Activated T-helper 1 cell treated with anti-CD3 and anti-CD28 coated beads, Interleukin-12 subunit alpha, Interleukin-12 subunit beta, Interleukin-2, Interleukin-4 antibody, amounts not matched to agents 30 ng/mL and 10 ng/mL and 1 ng/mL, durations not matched to agents 14 hours and 24 hours and 36 hours (primary cell): ENCODE measurements at regions of chr19 and their contacts with region 1.

Region 1: GRCh38 chr19:37906869-37907734 is at the start of gene SIPA1L3:
- DNase-seq: peak; percentile 91
- H3K4me3 Mint-ChIP-seq: peak within 1 kb of the TSS; percentile 93
- H3K27ac Mint-ChIP-seq: peak within 1 kb of the TSS; percentile 68
- H3K4me1 Mint-ChIP-seq: peaks cover 17% of the 10 kb centered on the region
- H3K27me3 Mint-ChIP-seq: peaks cover 2% of the 10 kb centered on the region
- total RNA-seq, gene SIPA1L3: 16.7 and 18.4 TPM in 2 replicates

Region 2: GRCh38 chr19:37594304-37594981 is 312.7 kb before region 1 on chr19 and contains the starts of genes ZNF540 and ZNF571:
- intact Hi-C with region 1: loop called (anchors 2 kb)
- DNase-seq: peak; percentile 81
- H3K4me3 Mint-ChIP-seq: peak within 1 kb of the TSS; percentile 88
- H3K27ac Mint-ChIP-seq: peak within 1 kb of the TSS; percentile 91
- H3K4me1 Mint-ChIP-seq: peaks cover 24% of the 10 kb centered on the region
- H3K27me3 Mint-ChIP-seq: no peaks in the 10 kb centered on the region
- total RNA-seq, gene ZNF540: 0.39 and 0.70 TPM in 2 replicates
- total RNA-seq, gene ZNF571: 0.64 and 1.4 TPM in 2 replicates

Region 3: GRCh38 chr19:37876032-37876431 is 31.1 kb before region 1 on chr19:
- intact Hi-C with region 1: no loop called
- DNase-seq: no peak
- H3K4me3 Mint-ChIP-seq: no peak overlapping the region
- H3K27ac Mint-ChIP-seq: no peak overlapping the region
- H3K4me1 Mint-ChIP-seq: no peaks in the 10 kb centered on the region
- H3K27me3 Mint-ChIP-seq: peaks cover 2% of the 10 kb centered on the region

Region 4: DNA sequence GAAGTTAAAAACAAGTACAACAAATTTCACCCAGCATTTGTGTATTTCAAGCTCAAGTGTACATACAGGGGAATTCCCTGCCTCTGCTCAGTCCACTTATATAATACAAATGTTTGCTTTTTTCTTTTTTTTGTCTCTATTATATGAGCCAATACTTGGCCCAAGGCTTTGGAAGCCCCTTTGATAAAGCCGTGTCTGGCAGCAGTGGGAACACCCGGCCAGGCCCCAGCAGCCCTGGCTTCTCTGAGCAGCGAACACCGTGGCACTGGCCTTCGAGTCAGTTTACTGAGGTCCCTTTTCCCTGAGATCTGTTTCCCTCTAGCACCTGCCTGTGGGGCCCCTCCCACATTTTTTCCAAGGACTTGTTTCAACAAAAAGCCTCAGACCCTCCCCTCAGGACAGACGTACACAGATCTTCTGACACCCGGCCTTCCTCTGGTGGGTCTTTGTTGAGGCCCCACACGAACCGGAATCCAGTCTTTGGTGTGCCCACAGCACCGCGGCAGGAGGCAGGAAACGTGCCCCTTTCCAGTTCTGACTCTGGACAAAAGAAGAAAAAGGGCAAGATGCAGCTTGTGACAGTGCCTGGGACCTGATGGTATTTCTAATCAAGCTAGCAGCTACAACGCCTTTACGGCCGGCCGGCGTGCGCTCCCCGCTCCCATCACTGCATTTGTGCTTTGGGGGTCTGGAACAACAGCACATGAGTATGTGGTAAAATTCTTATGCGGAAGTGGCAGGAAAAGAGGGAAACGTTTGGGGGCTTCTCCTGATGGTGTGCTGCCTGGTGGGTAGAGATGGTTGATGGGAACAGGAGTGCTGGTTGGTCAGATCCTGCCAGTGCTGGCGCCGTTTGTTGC is 13.7 kb after region 1 on chr19:
- intact Hi-C with region 1: no loop called
- DNase-seq: no peak
- H3K4me3 Mint-ChIP-seq: no peak overlapping the region
- H3K27ac Mint-ChIP-seq: no peak overlapping the region
- H3K4me1 Mint-ChIP-seq: no peaks in the 10 kb centered on the region
- H3K27me3 Mint-ChIP-seq: no peaks in the 10 kb centered on the region

Region 5: DNA sequence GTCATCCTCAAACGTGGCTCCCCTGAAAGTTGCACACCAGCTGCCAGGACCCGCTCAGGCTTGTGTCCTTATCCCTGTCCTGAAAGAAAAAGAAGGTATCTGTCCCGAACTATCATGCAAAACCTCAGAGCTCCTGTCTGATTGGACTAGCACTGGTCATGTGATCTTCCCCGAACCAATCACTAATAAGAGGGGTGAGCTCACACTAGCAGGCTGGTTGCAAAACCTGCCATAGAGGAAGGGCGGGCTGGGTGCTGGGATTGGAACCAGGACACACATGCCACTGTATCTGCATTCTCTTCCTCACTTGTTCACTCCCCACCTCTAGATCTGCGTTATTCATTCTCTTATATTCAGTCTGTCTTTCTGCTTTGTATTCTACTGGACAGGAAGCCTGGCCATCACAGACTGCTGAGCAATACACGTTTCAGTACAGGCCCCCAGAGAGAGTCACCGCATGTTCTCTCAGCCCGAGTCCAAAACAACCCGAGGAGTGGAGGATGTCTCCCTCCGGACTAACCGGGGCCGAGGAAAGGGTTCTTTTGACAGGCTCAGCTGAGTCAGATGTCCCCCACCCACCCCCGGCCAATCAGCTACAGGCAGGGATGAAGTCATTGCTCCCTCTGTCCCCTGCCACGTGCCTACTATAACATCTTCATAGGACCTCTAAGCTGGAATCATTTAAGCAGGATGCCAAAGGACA is 97.6 kb after region 1 on chr19:
- intact Hi-C with region 1: loop called (anchors 5 kb)
- DNase-seq: no peak
- H3K4me3 Mint-ChIP-seq: no peak overlapping the region
- H3K27ac Mint-ChIP-seq: no peak overlapping the region
- H3K4me1 Mint-ChIP-seq: no peaks in the 10 kb centered on the region
- H3K27me3 Mint-ChIP-seq: no peaks in the 10 kb centered on the region

Region 6: GRCh38 chr19:38142176-38143035 is 235.3 kb after region 1 on chr19:
- intact Hi-C with region 1: loop called (anchors 2 kb)
- DNase-seq: peak; percentile 7
- H3K4me3 Mint-ChIP-seq: no peak overlapping the region
- H3K27ac Mint-ChIP-seq: no peak overlapping the region
- H3K4me1 Mint-ChIP-seq: no peaks in the 10 kb centered on the region
- H3K27me3 Mint-ChIP-seq: no peaks in the 10 kb centered on the region

Region 7: GRCh38 chr19:38277969-38278680 is 371.0 kb after region 1 on chr19:
- intact Hi-C with region 1: no loop called
- DNase-seq: no peak
- H3K4me3 Mint-ChIP-seq: no peak overlapping the region
- H3K27ac Mint-ChIP-seq: no peak overlapping the region
- H3K4me1 Mint-ChIP-seq: peaks cover 19% of the 10 kb centered on the region
- H3K27me3 Mint-ChIP-seq: peaks cover 3% of the 10 kb centered on the region

Region 8: GRCh38 chr19:38315657-38316476 is 408.8 kb after region 1 on chr19 and contains the start of gene YIF1B:
- intact Hi-C with region 1: loop called (anchors 1 kb)
- DNase-seq: peak; percentile 94
- H3K4me3 Mint-ChIP-seq: peak within 1 kb of the TSS; percentile 85
- H3K27ac Mint-ChIP-seq: peak within 1 kb of the TSS; percentile 96
- H3K4me1 Mint-ChIP-seq: peaks cover 46% of the 10 kb centered on the region
- H3K27me3 Mint-ChIP-seq: no peaks in the 10 kb centered on the region
- total RNA-seq, gene YIF1B: 89.8 and 96.0 TPM in 2 replicates

Region 9: DNA sequence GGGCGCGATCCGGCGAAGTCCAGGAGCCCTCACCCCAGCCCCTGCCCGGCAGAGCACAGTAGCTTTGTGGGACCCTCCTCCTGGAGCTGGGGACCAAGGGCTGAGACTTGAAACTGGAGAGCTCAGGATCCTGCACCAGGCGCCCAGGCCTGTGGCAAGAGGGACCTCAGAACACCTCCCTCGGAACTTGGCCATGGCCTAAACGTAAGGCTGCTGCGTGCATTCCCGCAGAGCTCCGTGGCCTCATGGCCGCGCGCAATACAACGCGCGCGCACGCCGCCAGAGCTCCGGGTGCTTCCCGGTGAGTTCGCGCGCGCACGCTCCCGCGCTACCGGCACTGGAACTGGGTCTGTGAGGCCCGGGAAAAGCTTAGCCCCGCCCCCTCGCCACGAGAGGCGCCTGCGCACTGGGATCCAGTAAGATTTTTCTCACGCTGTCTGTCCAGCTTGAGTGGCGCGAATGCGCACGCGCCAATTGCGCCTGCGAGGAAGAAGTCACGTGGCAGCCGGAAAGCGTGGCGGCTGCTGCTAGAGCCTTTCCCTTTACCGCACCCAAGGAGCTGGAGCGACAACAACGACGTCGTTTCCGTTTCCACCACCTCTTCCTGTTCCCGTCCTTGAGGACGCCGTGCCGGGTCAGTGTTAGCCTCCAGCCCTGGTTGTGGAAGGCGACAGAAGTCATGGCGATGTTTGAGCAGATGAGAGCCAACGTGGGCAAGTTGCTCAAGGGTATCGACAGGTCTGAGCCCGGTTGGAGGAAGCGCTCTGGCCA is 711.7 kb after region 1 on chr19 and contains the start of gene EIF3K:
- intact Hi-C with region 1: loop called (anchors 10 kb)
- DNase-seq: peak; percentile 98
- H3K4me3 Mint-ChIP-seq: peak within 1 kb of the TSS; percentile 98
- H3K27ac Mint-ChIP-seq: peak within 1 kb of the TSS; percentile 84
- H3K4me1 Mint-ChIP-seq: peaks cover 32% of the 10 kb centered on the region
- H3K27me3 Mint-ChIP-seq: no peaks in the 10 kb centered on the region
- total RNA-seq, gene EIF3K: 309 and 326 TPM in 2 replicates